Activated B cell treated with CpG ODN at 0.5 μM for 24 hours (primary cell): ENCODE measurements at regions of chr20 and their contacts with region 1.

Region 1: DNA sequence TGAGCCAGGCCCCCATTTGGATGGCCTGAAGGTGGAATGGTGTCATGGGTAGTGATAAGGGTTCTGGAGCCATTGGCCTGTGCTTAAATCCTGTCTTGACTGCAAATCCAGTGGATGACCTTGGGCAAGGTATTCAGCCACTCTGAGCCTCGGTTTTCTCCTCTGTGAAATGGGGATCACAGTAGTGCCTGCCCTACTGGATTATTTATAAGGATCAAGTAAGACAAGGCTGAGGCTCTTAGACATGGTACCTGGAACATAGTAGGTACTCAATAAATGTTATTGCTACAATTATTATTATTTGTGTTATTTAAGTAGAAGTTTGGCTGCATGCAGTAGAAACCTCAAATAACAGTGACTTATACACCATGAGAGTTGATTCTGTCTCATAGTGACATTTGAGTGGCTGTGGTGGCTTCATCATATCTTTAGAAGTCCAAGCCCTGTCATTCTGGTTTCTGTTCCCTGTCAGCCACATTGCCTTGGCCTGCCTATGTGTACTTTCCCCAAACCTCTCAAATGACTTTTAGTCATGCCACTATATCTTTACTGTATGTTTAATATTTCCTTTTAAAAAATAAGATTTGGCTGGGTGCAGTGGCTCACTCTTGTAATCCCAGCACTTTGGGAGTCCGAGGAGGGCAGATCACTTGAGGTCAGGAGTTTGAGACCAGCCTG is 37.6 kb upstream of the CHMP4B start:
- DNase-seq: no peak
- ATAC-seq: peak; percentile 65
- H3K4me3 Mint-ChIP-seq: peak overlapping the region; percentile 41
- H3K27ac Mint-ChIP-seq: peak overlapping the region; percentile 93
- H3K4me1 Mint-ChIP-seq: peaks cover 64% of the 10 kb centered on the region
- H3K27me3 Mint-ChIP-seq: no peaks in the 10 kb centered on the region
- CTCF ChIP-seq: no peak

Region 2: GRCh38 chr20:33423141-33423834 is 350.3 kb before region 1 on chr20:
- CTCF ChIA-PET with region 1: no interaction called
- POLR2A ChIA-PET with region 1: no interaction called
- intact Hi-C with region 1: no loop called
- DNase-seq: no peak
- ATAC-seq: no peak
- H3K4me3 Mint-ChIP-seq: no peak overlapping the region
- H3K27ac Mint-ChIP-seq: no peak overlapping the region
- H3K4me1 Mint-ChIP-seq: no peaks in the 10 kb centered on the region
- H3K27me3 Mint-ChIP-seq: no peaks in the 10 kb centered on the region
- CTCF ChIP-seq: no peak

Region 3: GRCh38 chr20:33862709-33863403 is 89.3 kb after region 1 on chr20:
- CTCF ChIA-PET with region 1: interaction called, 4 read pairs
- POLR2A ChIA-PET with region 1: no interaction called
- intact Hi-C with region 1: loop called (anchors 2 kb)
- DNase-seq: peak; percentile 54
- ATAC-seq: peak; percentile 60
- H3K4me3 Mint-ChIP-seq: no peak overlapping the region
- H3K27ac Mint-ChIP-seq: no peak overlapping the region
- H3K4me1 Mint-ChIP-seq: peaks cover 26% of the 10 kb centered on the region
- H3K27me3 Mint-ChIP-seq: no peaks in the 10 kb centered on the region
- CTCF ChIP-seq: no peak

Region 4: GRCh38 chr20:34062570-34063482 is 289.3 kb after region 1 on chr20:
- CTCF ChIA-PET with region 1: no interaction called
- POLR2A ChIA-PET with region 1: no interaction called
- intact Hi-C with region 1: no loop called
- DNase-seq: no peak
- ATAC-seq: no peak
- H3K4me3 Mint-ChIP-seq: no peak overlapping the region
- H3K27ac Mint-ChIP-seq: no peak overlapping the region
- H3K4me1 Mint-ChIP-seq: peaks cover 40% of the 10 kb centered on the region
- H3K27me3 Mint-ChIP-seq: no peaks in the 10 kb centered on the region
- CTCF ChIP-seq: no peak